ENCODE measurements at regions of chr2 and their contacts with region 1.

Region 1: GRCh38 chr2:17851731-17852585 is 26.5 kb upstream of the KCNS3 start:
- DNase-seq: peak; percentile 10
- H3K4me3 ChIP-seq: no peak overlapping the region
- CTCF ChIP-seq: peak; percentile 81

Region 2: DNA sequence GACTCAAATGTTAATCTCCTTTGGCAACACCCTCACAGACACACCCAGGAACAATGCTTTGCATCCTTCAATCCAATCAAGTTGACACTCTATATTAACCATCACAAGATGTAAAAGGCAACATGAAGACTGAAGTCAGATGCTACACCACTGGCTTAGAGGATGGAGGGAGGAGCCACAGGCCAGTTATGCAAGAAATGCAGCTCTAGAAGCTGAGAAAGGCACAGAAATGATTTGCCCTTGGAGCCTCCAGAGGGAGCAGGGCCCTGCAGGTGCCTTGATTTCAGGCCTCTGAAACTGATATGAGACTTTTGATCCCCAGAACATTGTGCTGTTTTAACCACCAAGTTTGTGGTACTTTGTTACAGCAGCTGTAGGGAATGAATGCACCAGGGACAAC is 302.9 kb after region 1 on chr2:
- CTCF ChIA-PET with region 1: interaction called, 76 read pairs
- POLR2A ChIA-PET with region 1: no interaction called
- DNase-seq: no peak
- H3K4me3 ChIP-seq: no peak overlapping the region
- CTCF ChIP-seq: no peak

Region 3: GRCh38 chr2:18171191-18172139 is 319.5 kb after region 1 on chr2:
- CTCF ChIA-PET with region 1: interaction called, 50 read pairs
- POLR2A ChIA-PET with region 1: no interaction called
- DNase-seq: no peak
- H3K4me3 ChIP-seq: no peak overlapping the region
- CTCF ChIP-seq: no peak

Region 4: DNA sequence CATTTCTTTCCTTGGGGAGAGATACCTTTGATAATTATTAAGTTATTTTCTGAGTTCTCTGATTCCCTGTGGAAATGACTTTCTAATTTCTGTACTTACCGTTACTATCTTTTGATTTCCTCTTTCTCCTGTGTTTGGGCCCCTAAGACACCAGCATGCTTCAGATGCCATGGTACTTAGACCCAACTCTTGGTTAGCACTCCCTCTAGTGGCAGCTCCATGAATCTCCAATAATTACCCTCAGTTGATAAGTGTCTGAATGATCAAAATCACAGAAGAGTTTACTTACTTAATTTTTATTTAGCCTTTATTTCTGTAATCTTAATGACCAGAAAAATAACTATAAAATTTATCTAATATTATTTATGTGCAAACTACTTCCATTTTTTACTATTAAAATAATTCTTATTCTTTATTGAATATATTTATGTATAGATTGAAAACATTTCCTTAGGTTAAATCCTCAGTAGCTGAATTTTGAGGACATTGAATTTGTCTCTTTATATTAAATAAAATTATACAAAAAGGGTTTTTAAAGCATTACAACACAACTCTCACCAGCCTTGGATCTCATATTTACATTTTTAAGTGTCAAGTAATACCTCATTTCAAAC is 326.9 kb after region 1 on chr2:
- CTCF ChIA-PET with region 1: interaction called, 50 read pairs
- POLR2A ChIA-PET with region 1: no interaction called
- DNase-seq: no peak
- H3K4me3 ChIP-seq: no peak overlapping the region
- CTCF ChIP-seq: peak; percentile 66

Measured in AG04449 (cell line).